Head of caudate nucleus (tissue), 42 donors: ENCODE measurements at regions of chr4 and their contacts with region 1.

Region 1: DNA sequence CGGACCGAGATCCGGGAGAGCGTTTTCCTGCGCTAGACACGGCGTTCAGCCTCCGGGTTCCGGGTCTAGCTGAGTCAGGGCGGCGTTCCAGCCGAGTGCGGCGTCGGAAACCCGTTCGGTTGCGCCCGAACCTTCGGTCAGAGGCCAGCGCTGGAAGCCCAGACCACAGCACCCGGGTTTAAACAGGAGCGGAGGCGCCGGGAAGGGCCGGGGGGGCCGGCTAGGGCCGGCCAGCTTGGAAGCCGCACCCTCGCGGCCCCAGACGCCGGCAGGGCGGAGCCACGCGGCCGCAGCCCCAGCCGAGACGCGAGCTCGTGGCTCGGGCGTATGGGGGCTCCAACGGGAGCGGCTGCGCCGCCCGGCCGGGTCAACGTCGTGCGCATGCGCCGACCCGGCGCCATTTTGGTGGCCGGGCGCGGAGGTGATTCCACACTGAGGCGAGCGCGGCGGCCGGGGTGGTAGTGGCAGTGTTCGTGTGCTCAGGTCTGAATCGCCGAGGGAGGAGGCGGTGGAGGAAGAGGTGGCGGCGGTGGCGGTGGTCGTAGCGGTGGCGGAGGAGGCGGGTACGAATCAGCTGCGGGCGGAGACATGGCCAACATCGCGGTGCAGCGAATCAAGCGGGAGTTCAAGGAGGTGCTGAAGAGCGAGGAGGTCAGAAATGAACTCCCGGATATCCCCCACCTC is at the start of gene UBE2K:
- DNase-seq: peak; percentile 42 to 94 (median 86)

Region 2: GRCh38 chr4:39527273-39528060 is 170.4 kb before region 1 on chr4 and contains the start of gene UGDH:
- intact Hi-C with region 1: loop called (anchors 5 kb)
- DNase-seq: peak; percentile 88 to 99 (median 97)